ENCODE measurements at regions of chr3 and their contacts with region 1.

Region 1: GRCh38 chr3:63911873-63912767 is at the start of gene SCAANT1:
- DNase-seq: peak; percentile 92 to 96
- ATAC-seq: peak; percentile 91 to 93 (median 92)
- H3K4me3 ChIP-seq: peak within 1 kb of the TSS; percentile 85
- H3K27ac ChIP-seq: peak within 1 kb of the TSS; percentile 99
- H3K4me1 ChIP-seq: peaks cover 18% of the 10 kb centered on the region
- H3K27me3 ChIP-seq: no peaks in the 10 kb centered on the region
- CTCF ChIP-seq: no peak
- total RNA-seq, gene SCAANT1: not detected

Region 2: DNA sequence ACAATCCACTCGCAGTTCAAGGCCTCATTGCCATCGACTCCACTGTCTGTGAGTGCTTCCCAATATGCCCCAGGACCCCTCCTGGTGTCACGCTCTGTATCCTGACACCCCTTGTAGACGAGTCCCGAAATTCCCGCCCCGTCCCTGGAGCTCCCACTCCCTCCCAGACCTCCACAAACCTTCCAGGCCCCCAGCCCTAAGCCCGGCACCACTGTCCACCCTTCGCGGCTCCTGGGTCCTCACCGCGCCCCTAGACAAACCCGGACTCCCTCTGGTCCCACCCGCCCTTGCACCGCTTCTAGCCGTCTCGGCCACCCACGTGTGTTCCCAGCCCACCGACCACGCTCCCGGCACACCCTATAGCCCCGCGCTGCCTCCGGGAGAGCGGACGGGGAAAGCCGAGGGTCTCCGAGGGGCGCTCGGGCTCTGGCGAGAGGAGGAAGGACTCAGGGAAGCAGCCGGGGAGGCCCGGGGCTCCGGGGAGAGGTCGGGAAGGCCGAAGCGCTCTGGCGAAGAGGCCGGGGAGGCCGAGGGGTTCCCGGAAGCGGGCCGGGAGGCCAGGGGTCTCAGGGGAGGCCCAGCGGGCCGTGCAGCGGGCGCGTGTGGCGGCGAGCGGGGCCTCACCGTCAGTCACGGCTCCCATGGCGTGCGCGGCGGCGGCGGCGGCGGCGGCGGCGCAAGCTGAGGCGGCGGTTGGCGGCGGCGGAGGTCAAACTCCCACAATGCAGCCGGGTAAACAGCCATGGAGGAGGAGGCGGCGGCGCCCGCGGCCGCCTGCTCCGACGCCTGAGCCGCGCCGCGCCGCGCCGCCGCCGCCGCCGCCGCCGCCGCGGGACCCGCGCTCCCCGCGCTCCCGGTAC is 48.7 kb before region 1 on chr3 and contains the starts of genes ATXN7 and THOC7:
- intact Hi-C with region 1: loop called (anchors 2 to 5 kb)
- DNase-seq: peak; percentile 78 to 87
- ATAC-seq: peak; percentile 85 to 92 (median 91)
- H3K4me3 ChIP-seq: peak within 1 kb of the TSS; percentile 99
- H3K27ac ChIP-seq: peak within 1 kb of the TSS; percentile 98
- H3K4me1 ChIP-seq: peaks cover 19% of the 10 kb centered on the region
- H3K27me3 ChIP-seq: no peaks in the 10 kb centered on the region
- CTCF ChIP-seq: no peak
- total RNA-seq, gene ATXN7: 16.2 to 27.2 (median 21.6) TPM
- total RNA-seq, gene THOC7: 61.0 to 90.8 (median 75.1) TPM

Region 3: DNA sequence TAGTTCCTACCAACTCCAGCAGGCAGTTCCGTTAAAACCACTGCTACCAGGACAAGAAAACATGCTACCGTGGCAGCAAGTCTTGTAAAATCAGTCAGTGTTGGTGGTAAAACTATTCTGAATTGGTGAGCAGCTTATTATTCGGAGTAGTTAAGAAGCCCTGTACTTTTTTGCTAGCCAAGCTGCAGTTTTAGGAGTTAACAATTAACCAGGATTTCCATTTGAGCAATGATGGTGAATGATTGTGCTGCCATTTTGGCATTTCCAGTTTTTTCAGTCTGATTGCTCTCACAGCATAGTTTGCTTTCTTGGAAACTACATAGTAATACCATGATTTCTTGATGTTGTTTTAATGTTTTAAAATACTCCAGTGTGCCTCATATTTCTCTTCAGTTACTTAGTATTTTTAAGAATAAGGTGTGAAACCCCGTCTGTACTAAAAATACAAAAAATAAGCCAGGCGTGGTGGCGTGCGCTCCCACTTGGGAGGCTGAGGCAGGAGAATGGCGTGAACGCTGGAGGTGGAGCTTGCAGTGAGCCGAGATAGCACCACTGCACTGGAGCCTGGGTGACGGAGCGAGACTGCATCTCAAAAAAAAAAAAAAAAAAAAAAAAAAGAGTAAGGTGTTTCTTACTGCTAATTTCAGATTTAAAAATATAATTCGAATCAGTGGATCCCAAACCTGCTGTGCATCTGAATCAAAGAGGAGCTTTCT is 43.9 kb after region 1 on chr3:
- intact Hi-C with region 1: loop called in 1 of 2 experiments (anchors 5 kb)
- DNase-seq: no peak
- ATAC-seq: no peak
- H3K4me3 ChIP-seq: no peak overlapping the region
- H3K27ac ChIP-seq: no peak overlapping the region
- H3K4me1 ChIP-seq: peaks cover 37% of the 10 kb centered on the region
- H3K27me3 ChIP-seq: no peaks in the 10 kb centered on the region
- CTCF ChIP-seq: no peak

Region 4: DNA sequence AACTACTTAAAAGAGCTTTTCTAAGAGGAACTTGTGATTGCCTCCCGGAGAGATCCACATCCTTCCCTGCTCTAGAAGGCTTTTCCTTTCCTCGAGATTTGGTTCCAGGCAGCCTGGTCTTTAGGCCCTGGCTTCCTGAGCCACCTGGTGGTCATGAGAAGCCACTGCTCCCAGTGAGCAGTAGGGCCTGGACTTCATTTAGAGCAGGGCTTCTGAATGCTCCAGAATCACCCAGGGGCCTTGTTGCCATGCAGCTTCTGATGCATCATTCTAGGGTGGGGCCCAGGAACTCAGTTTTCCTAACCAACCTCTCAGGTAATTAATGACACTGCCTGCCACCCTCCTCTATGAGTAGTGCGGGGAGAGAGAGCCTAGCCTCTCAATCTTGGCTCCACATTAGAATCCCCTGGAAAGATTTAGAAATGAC is 81.5 kb after region 1 on chr3:
- intact Hi-C with region 1: loop called in 1 of 2 experiments (anchors 5 kb)
- DNase-seq: peak; percentile 55 to 79
- ATAC-seq: peak; percentile 90 to 96 (median 92)
- H3K4me3 ChIP-seq: no peak overlapping the region
- H3K27ac ChIP-seq: no peak overlapping the region
- H3K4me1 ChIP-seq: peaks cover 1% of the 10 kb centered on the region
- H3K27me3 ChIP-seq: no peaks in the 10 kb centered on the region
- CTCF ChIP-seq: peak; percentile 94